WTC11 (cell line): ENCODE measurements at regions of chr4 and their contacts with region 1.

Region 1: DNA sequence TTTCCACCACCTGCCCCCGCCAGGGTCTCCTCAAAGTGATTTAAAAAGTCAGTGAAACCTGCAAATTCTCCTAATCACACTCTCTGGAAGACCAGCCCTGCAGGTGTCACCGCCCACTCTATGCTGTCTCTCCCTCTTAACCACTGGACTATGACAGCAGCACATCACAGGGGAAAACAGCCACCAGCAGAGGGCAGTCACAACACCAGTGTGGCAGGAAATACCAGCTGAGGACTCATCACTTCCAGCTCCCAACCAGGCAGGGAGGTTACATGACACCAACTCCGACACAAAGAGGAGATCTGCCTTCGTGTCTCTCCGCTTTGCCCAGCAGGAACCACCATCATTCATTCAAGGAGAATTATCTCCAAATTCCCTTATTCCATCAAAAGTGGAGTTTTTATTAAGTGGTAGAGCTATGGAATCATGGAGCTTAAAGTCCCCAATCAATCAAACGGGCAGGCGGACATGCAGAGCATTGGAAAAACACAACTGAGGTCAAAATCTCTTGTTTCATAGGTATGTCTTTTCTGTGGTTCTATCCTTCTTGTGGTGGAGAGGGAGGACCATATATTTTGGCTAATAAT is 91.3 kb downstream of the NSUN7 start:
- DNase-seq: peak; percentile 97
- ATAC-seq: peak; percentile 94
- H3K4me3 Mint-ChIP-seq: peak overlapping the region; percentile 23; the same call in 1 of the 2 replicates
- H3K27ac Mint-ChIP-seq: peak overlapping the region; percentile 82
- H3K4me1 Mint-ChIP-seq: peaks cover 19% of the 10 kb centered on the region
- H3K27me3 Mint-ChIP-seq: no peaks in the 10 kb centered on the region
- CTCF ChIP-seq: peak; percentile 69

Region 2: GRCh38 chr4:40749717-40750460 is 91.2 kb before region 1 on chr4 and contains the start of gene NSUN7:
- CTCF ChIA-PET with region 1: interaction called, 15 read pairs
- POLR2A ChIA-PET with region 1: no interaction called
- DNase-seq: peak; percentile 95
- ATAC-seq: peak; percentile 85
- H3K4me3 Mint-ChIP-seq: peak within 1 kb of the TSS; percentile 90
- H3K27ac Mint-ChIP-seq: peak within 1 kb of the TSS; percentile 95
- H3K4me1 Mint-ChIP-seq: peaks cover 27% of the 10 kb centered on the region
- H3K27me3 Mint-ChIP-seq: no peaks in the 10 kb centered on the region; the same call in 1 of the 2 replicates
- CTCF ChIP-seq: no peak
- total RNA-seq, gene NSUN7: 24.1 to 30.2 TPM (median 28.9 TPM) in 3 replicates

Region 3: GRCh38 chr4:40856822-40857362 is 15.8 kb after region 1 on chr4:
- CTCF ChIA-PET with region 1: interaction called, 28 read pairs
- POLR2A ChIA-PET with region 1: interaction called, 3 read pairs
- DNase-seq: peak; percentile 87
- ATAC-seq: peak; percentile 98
- H3K4me3 Mint-ChIP-seq: peak overlapping the region; percentile 85
- H3K27ac Mint-ChIP-seq: no peak overlapping the region
- H3K4me1 Mint-ChIP-seq: peaks cover 13% of the 10 kb centered on the region
- H3K27me3 Mint-ChIP-seq: no peaks in the 10 kb centered on the region
- CTCF ChIP-seq: no peak